AG04450 (cell line): ENCODE measurements at regions of chr2 and their contacts with region 1.

Region 1: GRCh38 chr2:233966388-233966787 is 49.2 kb downstream of the TRPM8 start:
- DNase-seq: no peak
- H3K4me3 ChIP-seq: no peak overlapping the region
- H3K27ac ChIP-seq: no peak overlapping the region
- H3K27me3 ChIP-seq: no peaks in the 10 kb centered on the region
- CTCF ChIP-seq: no peak

Region 2: GRCh38 chr2:233928594-233929351 is 37.6 kb before region 1 on chr2:
- CTCF ChIA-PET with region 1: interaction called, 10 read pairs
- POLR2A ChIA-PET with region 1: no interaction called
- DNase-seq: no peak
- H3K4me3 ChIP-seq: no peak overlapping the region
- H3K27ac ChIP-seq: no peak overlapping the region
- H3K27me3 ChIP-seq: peaks cover 9% of the 10 kb centered on the region
- CTCF ChIP-seq: peak; percentile 65

Region 3: GRCh38 chr2:234395891-234396420 is 429.6 kb after region 1 on chr2:
- CTCF ChIA-PET with region 1: no interaction called
- POLR2A ChIA-PET with region 1: no interaction called
- DNase-seq: no peak
- H3K4me3 ChIP-seq: no peak overlapping the region
- H3K27ac ChIP-seq: no peak overlapping the region
- H3K27me3 ChIP-seq: peaks cover 3% of the 10 kb centered on the region
- CTCF ChIP-seq: no peak